ENCODE measurements at regions of chr19 and their contacts with region 1.

Region 1: DNA sequence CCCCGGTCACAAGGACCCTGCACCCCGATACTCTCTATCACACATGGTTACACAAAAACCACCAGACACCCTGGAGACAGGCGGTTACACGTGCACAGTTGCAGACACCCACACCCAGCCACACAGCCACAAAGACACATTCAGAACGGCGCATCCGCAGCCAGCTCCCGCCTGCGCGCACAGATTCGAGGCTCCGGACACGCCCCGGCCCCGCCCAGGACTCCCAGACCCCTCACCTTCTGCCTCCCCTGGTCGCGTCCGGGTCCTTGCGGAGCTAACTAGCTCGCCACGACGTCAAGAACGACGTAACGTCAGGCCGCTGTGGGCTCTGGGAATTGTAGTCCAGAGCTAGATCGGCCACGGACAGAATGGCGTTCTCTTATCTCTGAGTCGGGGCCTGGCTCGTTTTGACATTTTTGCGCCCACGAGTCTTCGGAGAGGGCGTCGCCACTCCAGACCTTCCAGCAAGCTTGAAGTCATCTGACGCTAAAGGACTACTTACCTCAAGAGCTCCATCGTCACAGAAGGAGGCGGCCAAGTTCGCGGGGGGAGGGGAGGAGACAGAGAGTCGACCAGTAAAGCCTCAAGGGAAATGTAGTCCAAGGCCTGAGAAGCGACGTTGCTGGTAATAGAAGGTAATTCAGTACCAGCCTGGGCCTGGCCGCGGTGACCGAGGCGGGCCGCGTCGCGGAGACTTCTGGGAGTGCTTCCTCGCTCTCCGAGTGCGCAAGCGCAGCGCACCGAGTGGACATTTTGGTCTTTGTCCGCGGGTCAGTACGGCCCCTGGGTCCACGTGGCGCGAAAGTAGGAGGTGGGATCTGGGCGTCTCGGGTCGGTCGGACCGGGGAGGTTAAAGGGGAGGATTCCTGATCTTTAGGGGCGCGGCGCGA is at the starts of genes ZNF146 and ZNF565:
- DNase-seq: peak; percentile 97
- H3K4me3 Mint-ChIP-seq: no peak within 1 kb of the TSS
- H3K27ac Mint-ChIP-seq: no peak within 1 kb of the TSS
- H3K4me1 Mint-ChIP-seq: peaks cover 19% of the 10 kb centered on the region
- H3K27me3 Mint-ChIP-seq: no peaks in the 10 kb centered on the region
- total RNA-seq, gene ZNF146: 64.6 to 68.4 TPM
- total RNA-seq, gene ZNF565: 2.0 to 3.5 TPM

Region 2: GRCh38 chr19:36132489-36132891 is 82.1 kb before region 1 on chr19:
- CTCF ChIA-PET with region 1: interaction called, 22 read pairs
- POLR2A ChIA-PET with region 1: interaction called, 13 read pairs
- DNase-seq: peak; percentile 72
- H3K4me3 Mint-ChIP-seq: peak overlapping the region; percentile 30
- H3K27ac Mint-ChIP-seq: peak overlapping the region; percentile 87
- H3K4me1 Mint-ChIP-seq: peaks cover 65% of the 10 kb centered on the region
- H3K27me3 Mint-ChIP-seq: no peaks in the 10 kb centered on the region

Region 3: GRCh38 chr19:36225219-36225892 is 10.7 kb after region 1 on chr19:
- CTCF ChIA-PET with region 1: no interaction called
- POLR2A ChIA-PET with region 1: interaction called, 20 read pairs
- DNase-seq: no peak
- H3K4me3 Mint-ChIP-seq: peak overlapping the region; percentile 33
- H3K27ac Mint-ChIP-seq: peak overlapping the region; percentile 77
- H3K4me1 Mint-ChIP-seq: peaks cover 22% of the 10 kb centered on the region
- H3K27me3 Mint-ChIP-seq: no peaks in the 10 kb centered on the region

Region 4: DNA sequence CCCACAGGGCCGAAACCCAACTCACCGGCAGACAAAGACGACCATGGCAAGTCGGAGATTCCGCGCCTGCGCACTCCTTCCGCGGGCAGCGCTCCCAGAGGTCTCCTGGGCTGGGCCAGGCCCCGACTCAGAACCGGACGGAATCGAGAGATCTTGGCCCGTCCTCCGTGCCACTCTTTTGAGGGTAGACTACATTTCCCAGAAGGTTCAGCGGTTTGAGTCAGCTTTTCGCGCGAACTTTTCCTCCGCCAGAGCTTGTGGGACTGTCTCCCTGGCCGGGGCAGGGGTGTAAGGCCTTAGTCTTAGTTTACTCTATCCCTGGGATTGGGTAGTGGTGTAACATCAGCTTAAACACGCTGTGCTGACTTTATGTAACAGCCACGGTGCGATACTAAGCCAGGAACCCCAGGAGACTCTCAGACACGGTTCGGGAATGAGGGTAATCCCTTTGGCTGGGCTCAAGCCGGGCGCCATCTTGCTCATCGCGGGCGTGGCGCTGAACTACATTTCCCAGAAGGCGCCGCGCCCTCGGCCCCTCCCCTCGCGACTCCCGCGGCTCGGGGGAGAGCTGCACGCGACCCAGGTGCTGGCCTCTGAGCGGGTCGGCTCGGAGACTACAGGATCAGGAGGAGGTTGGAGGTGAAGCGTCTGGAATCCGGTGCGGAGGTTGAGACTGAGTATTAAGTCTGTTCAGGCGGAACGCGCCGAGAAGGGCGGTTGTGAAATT is 313.7 kb after region 1 on chr19 and contains the start of gene ZNF260:
- CTCF ChIA-PET with region 1: no interaction called
- POLR2A ChIA-PET with region 1: interaction called, 15 read pairs
- DNase-seq: peak; percentile 91
- H3K4me3 Mint-ChIP-seq: peak within 1 kb of the TSS; percentile 94
- H3K27ac Mint-ChIP-seq: peak within 1 kb of the TSS; percentile 91
- H3K4me1 Mint-ChIP-seq: peaks cover 23% of the 10 kb centered on the region
- H3K27me3 Mint-ChIP-seq: no peaks in the 10 kb centered on the region
- total RNA-seq, gene ZNF260: 9.0 to 9.9 TPM

Measured in activated CD4-positive, alpha-beta memory T cell treated with anti-CD3 and anti-CD28 coated beads, Interleukin-2, amount 10 ng/mL, durations not matched to agents 7 days and 5 days (primary cell).